Activated T-helper 1 cell treated with anti-CD3 and anti-CD28 coated beads, Interleukin-12 subunit alpha, Interleukin-12 subunit beta, Interleukin-2, Interleukin-4 antibody, amounts not matched to agents 30 ng/mL and 10 ng/mL and 1 ng/mL, durations not matched to agents 14 hours and 24 hours and 36 hours (primary cell): ENCODE measurements at regions of chr3 and their contacts with region 1.

Region 1: GRCh38 chr3:57227204-57227929 is at the start of gene APPL1:
- DNase-seq: peak; percentile 92
- H3K4me3 Mint-ChIP-seq: peak within 1 kb of the TSS; percentile 93
- H3K27ac Mint-ChIP-seq: peak within 1 kb of the TSS; percentile 82
- H3K4me1 Mint-ChIP-seq: peaks cover 42% of the 10 kb centered on the region
- H3K27me3 Mint-ChIP-seq: peaks cover 8% of the 10 kb centered on the region
- total RNA-seq, gene APPL1: 39.9 and 46.0 TPM in 2 replicates

Region 2: GRCh38 chr3:56682462-56683121 is 544.8 kb before region 1 on chr3:
- intact Hi-C with region 1: loop called (anchors 5 kb)
- DNase-seq: peak; percentile 77
- H3K4me3 Mint-ChIP-seq: peak overlapping the region; percentile 97
- H3K27ac Mint-ChIP-seq: peak overlapping the region; percentile 96
- H3K4me1 Mint-ChIP-seq: peaks cover 45% of the 10 kb centered on the region
- H3K27me3 Mint-ChIP-seq: peaks cover 2% of the 10 kb centered on the region

Region 3: DNA sequence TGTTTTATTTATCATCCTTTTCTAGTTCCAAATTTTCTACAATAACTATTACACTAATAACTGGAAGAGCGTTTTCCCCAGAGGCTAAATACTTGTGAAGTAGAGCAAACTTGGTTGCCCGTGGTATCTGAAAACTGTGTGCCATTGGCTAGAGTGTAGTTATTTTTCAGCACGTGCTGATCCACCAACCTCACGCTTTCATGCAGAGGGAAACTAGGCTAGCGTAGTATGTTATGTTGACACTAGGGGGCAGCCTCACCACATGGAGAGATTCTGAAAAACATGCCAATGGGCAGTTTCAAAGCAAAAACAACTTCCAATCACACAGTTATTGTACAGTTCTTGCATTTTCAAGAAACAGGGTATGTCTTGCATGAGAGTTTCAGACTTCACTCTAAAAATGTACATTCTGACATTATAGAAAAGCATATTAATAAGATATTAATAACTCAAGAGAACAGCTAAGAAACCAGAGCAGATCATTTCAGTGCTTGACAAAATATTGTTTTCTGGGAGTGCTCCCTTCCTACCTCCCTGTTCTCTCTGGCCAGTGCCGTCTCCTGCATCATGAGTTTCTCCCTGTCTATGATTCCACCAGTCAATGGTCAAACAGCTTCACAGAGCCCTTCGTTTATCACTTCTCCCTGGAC is 127.2 kb before region 1 on chr3:
- intact Hi-C with region 1: loop called (anchors 5 kb)
- DNase-seq: peak; percentile 31
- H3K4me3 Mint-ChIP-seq: no peak overlapping the region
- H3K27ac Mint-ChIP-seq: no peak overlapping the region
- H3K4me1 Mint-ChIP-seq: no peaks in the 10 kb centered on the region
- H3K27me3 Mint-ChIP-seq: peaks cover 2% of the 10 kb centered on the region

Region 4: GRCh38 chr3:57199895-57200297 is 27.5 kb before region 1 on chr3 and contains the start of gene HESX1:
- intact Hi-C with region 1: loop called (anchors 2 kb)
- DNase-seq: no peak
- H3K4me3 Mint-ChIP-seq: no peak within 1 kb of the TSS
- H3K27ac Mint-ChIP-seq: no peak within 1 kb of the TSS
- H3K4me1 Mint-ChIP-seq: no peaks in the 10 kb centered on the region
- H3K27me3 Mint-ChIP-seq: peaks cover 3% of the 10 kb centered on the region
- total RNA-seq, gene HESX1: 0.18 and 0.32 TPM in 2 replicates

Region 5: DNA sequence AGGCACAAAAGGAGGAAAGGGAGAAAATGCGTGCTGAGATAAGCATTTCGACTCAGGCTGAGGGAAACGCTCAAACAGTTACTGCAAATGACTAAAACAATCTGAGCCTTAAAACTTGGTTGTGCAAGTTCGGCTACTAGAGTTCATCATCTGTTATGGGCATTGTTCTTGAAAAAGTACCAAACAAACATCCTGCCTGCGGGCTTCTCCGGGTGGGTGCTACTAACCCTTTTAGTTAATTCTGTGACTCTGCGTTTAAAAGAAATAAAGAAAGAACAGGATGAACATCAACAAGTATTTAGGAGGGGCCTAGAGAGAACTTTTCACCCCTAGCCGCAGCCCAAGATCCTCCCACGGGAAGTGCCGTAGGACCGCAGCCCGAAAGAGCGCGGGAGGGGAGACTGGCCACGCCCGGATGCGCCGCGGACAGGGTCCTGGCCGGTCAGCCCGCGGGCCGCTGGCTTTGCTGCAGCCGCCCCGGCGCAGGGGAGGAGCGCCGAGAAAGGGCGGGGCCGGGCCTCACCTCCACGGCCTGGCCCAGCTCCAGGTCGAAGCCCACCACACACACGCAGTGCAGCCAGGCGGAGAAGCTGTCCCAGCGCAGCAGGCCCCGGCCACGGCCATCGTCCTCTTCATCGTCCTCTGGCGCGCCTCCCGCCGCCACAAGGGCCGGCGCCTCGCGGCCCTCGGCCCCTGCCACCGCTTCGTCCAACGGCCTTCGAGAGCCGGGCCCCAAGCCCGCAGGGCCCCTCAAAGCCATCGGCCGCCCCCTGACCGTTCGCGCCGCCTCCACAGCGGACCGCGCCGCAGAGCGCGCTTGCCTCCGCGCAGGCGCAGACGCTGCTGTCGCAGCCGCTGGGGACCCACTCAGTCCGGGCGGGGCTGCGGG is 465.1 kb after region 1 on chr3 and contains the start of gene DENND6A:
- intact Hi-C with region 1: loop called (anchors 1 kb)
- DNase-seq: peak; percentile 94
- H3K4me3 Mint-ChIP-seq: peak within 1 kb of the TSS; percentile 91
- H3K27ac Mint-ChIP-seq: peak within 1 kb of the TSS; percentile 91
- H3K4me1 Mint-ChIP-seq: peaks cover 30% of the 10 kb centered on the region
- H3K27me3 Mint-ChIP-seq: peaks cover 3% of the 10 kb centered on the region
- total RNA-seq, gene DENND6A: 23.6 and 26.2 TPM in 2 replicates

Region 6: GRCh38 chr3:57840473-57840872 is 613.1 kb after region 1 on chr3:
- intact Hi-C with region 1: no loop called
- DNase-seq: no peak
- H3K4me3 Mint-ChIP-seq: no peak overlapping the region
- H3K27ac Mint-ChIP-seq: no peak overlapping the region
- H3K4me1 Mint-ChIP-seq: peaks cover 6% of the 10 kb centered on the region
- H3K27me3 Mint-ChIP-seq: no peaks in the 10 kb centered on the region